Activated CD8-positive, alpha-beta memory T cell treated with anti-CD3 and anti-CD28 coated beads, Interleukin-2, amount 10 ng/mL, durations not matched to agents 7 days and 5 days (primary cell): ENCODE measurements at regions of chr3 and their contacts with region 1.

Region 1: GRCh38 chr3:149042789-149043386 is 43.4 kb downstream of the HLTF start:
- DNase-seq: no peak
- ATAC-seq: peak; percentile 91
- H3K4me3 Mint-ChIP-seq: peak overlapping the region; percentile 34
- H3K27ac Mint-ChIP-seq: peak overlapping the region; percentile 92
- H3K4me1 Mint-ChIP-seq: peaks cover 23% of the 10 kb centered on the region
- H3K27me3 Mint-ChIP-seq: no peaks in the 10 kb centered on the region

Region 2: DNA sequence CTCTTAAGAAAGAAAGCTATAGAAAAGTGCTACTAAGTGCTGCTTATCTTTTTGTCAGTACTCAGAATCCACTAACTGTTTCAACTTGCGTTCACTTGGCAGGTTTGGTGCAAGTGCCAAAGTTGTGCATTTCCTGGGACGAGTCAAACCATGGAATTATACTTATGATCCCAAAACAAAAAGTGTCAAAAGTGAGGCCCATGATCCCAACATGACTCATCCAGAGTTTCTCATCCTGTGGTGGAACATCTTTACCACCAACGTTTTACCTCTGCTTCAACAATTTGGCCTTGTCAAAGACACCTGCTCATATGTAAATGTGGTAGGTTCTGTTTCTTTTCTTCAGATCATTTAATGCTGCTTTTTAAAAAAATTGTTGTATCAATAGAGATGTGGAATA is 18.9 kb before region 1 on chr3:
- CTCF ChIA-PET with region 1: interaction called, 10 read pairs
- DNase-seq: no peak
- ATAC-seq: no peak
- H3K4me3 Mint-ChIP-seq: no peak overlapping the region
- H3K27ac Mint-ChIP-seq: no peak overlapping the region
- H3K4me1 Mint-ChIP-seq: peaks cover 20% of the 10 kb centered on the region
- H3K27me3 Mint-ChIP-seq: no peaks in the 10 kb centered on the region